B cell (primary cell): ENCODE measurements at regions of chr1 and their contacts with region 1.

Region 1: GRCh38 chr1:234599617-234600417 is 10.2 kb downstream of the IRF2BP2 start:
- DNase-seq: peak; percentile 89
- ATAC-seq: peak; percentile 73
- H3K4me3 ChIP-seq: peak overlapping the region; percentile 56 to 84 (median 66)
- H3K4me3 Mint-ChIP-seq: peak overlapping the region; percentile 90
- H3K27ac ChIP-seq: peak overlapping the region; percentile 83 to 93
- H3K27ac Mint-ChIP-seq: peak overlapping the region; percentile 97
- H3K4me1 ChIP-seq: peaks cover 53 to 54% of the 10 kb centered on the region in 2 donors
- H3K4me1 Mint-ChIP-seq: peaks cover 54% of the 10 kb centered on the region
- H3K27me3 ChIP-seq: no peaks in the 10 kb centered on the region
- H3K27me3 Mint-ChIP-seq: no peaks in the 10 kb centered on the region
- CTCF ChIP-seq: no peak

Region 2: GRCh38 chr1:234478481-234479309 is 121.1 kb before region 1 on chr1 and contains the start of gene TARBP1:
- CTCF ChIA-PET with region 1: no interaction called
- POLR2A ChIA-PET with region 1: no interaction called
- intact Hi-C with region 1: loop called (anchors 1 kb)
- DNase-seq: peak; percentile 93
- ATAC-seq: peak; percentile 68
- H3K4me3 ChIP-seq: peak within 1 kb of the TSS; percentile 46 to 76 (median 68)
- H3K4me3 Mint-ChIP-seq: peak within 1 kb of the TSS; percentile 87
- H3K27ac ChIP-seq: peak within 1 kb of the TSS; percentile 49 to 69
- H3K27ac Mint-ChIP-seq: peak within 1 kb of the TSS; percentile 89
- H3K4me1 ChIP-seq: peaks cover 30 to 36% of the 10 kb centered on the region in 2 donors
- H3K4me1 Mint-ChIP-seq: peaks cover 38% of the 10 kb centered on the region
- H3K27me3 ChIP-seq: no peaks in the 10 kb centered on the region
- H3K27me3 Mint-ChIP-seq: peaks cover 6% of the 10 kb centered on the region
- CTCF ChIP-seq: no peak
- total RNA-seq, gene TARBP1: 35.4 and 36.0 TPM in 2 replicates

Region 3: DNA sequence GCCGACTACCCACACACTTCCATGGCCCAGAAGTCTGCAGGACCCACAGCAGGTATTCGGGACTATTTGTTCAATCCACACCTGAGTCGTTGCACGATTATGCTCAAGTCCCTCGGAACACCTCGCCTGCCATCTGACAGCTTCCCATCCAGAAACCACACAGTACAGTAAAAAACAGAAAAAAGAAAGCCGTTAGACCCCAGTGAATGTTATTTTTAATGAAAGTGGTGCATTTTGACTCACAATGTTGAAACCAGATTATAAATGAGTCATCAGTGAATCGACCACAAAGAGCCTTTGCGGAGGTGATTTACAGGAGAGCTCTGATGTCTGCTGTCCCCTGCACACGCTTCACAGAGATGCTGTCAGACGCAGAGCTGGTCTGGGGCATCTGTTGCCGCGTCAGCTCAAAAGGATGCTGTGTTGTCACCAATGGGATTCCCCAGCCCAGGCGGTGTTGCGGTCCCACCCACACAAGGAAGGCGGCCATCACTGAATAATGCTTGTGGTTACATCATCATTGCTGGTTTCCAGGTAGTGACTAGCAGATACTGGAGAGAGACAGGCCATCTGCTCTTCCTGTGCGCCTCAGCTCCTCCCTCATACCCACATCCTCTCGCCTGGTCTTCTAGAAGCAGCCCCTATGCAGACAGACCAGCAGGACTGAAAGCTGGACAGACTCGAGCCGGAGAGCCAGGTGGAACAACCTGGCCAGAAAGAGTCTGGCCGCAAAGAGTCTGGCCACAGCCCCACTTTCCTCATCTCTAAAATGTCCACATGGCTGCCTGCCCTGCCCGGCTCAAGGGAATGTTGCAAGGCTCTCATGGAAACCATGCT is 412.0 kb after region 1 on chr1:
- CTCF ChIA-PET with region 1: interaction called, 4 read pairs
- POLR2A ChIA-PET with region 1: interaction called, 4 read pairs
- intact Hi-C with region 1: loop called (anchors 2 kb)
- DNase-seq: peak; percentile 97
- ATAC-seq: peak; percentile 87
- H3K4me3 ChIP-seq: peak overlapping the region; percentile 23 to 52 (median 32)
- H3K4me3 Mint-ChIP-seq: peak overlapping the region; percentile 76
- H3K27ac ChIP-seq: peak overlapping the region; percentile 89 to 96
- H3K27ac Mint-ChIP-seq: peak overlapping the region; percentile 96
- H3K4me1 ChIP-seq: peaks cover 50 to 65% of the 10 kb centered on the region in 2 donors
- H3K4me1 Mint-ChIP-seq: peaks cover 82% of the 10 kb centered on the region
- H3K27me3 ChIP-seq: no peaks in the 10 kb centered on the region
- H3K27me3 Mint-ChIP-seq: no peaks in the 10 kb centered on the region
- CTCF ChIP-seq: no peak

Region 4: GRCh38 chr1:235050911-235051360 is 451.1 kb after region 1 on chr1:
- CTCF ChIA-PET with region 1: no interaction called
- POLR2A ChIA-PET with region 1: interaction called, 10 read pairs
- intact Hi-C with region 1: no loop called
- DNase-seq: no peak
- ATAC-seq: peak; percentile 55
- H3K4me3 ChIP-seq: no peak overlapping the region
- H3K4me3 Mint-ChIP-seq: peak overlapping the region; percentile 32
- H3K27ac ChIP-seq: no peak overlapping the region
- H3K27ac Mint-ChIP-seq: peak overlapping the region; percentile 74
- H3K4me1 ChIP-seq: peaks cover 13 to 22% of the 10 kb centered on the region in 2 donors
- H3K4me1 Mint-ChIP-seq: peaks cover 41% of the 10 kb centered on the region
- H3K27me3 ChIP-seq: no peaks in the 10 kb centered on the region
- H3K27me3 Mint-ChIP-seq: no peaks in the 10 kb centered on the region
- CTCF ChIP-seq: no peak